Spleen (tissue), 13 donors: ENCODE measurements at regions of chr15 and their contacts with region 1.

Region 1: GRCh38 chr15:64651573-64652260 is 123.7 kb downstream of the RBPMS2 start:
- DNase-seq: no peak
- H3K4me3 ChIP-seq: no peak overlapping the region
- H3K27ac ChIP-seq: peak overlapping the region in 7 of 8 donors; percentile 10 to 75 (median 54)
- H3K4me1 ChIP-seq: peaks cover 10 to 47% (median 21%) of the 10 kb centered on the region in 6 donors
- H3K27me3 ChIP-seq: no peaks in the 10 kb centered on the region
- CTCF ChIP-seq: no peak
- POLR2A ChIP-seq: no peak

Region 2: DNA sequence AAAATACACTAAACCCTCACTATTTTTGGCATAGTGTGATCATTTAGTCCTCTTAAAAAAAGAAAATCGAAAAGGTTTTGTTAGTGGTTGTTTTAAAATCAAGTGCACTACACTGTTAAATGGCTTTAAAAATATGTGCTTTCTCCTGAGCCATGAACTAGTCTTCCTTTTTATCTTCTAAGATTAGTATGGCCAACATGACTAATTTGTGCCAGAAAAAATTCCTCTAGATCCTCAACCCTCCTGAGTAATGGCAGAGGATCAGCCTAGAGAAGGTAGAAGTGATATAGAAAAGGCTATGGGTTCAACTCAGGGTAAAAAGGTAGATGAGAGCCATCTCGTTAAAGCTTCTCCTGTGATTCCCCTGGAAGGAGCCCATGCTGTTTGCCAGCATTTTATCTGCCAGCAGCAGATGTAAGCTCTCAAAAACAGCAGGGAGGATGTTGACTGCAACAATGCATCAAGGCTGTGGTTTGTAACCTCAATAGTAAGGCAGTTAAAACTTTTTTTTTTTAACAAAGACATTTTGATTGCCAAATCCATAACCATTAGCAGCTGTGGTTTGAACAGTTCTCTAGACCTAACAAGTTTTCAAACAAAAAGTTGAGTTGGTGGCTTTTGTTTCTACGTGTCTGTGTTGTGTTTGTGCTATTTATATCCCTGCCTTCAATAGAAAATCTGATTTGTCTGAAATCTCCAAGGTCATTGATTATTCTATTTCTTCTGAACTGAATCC is 221.5 kb before region 1 on chr15:
- intact Hi-C with region 1: loop called (anchors 10 kb)
- DNase-seq: no peak
- H3K4me3 ChIP-seq: no peak overlapping the region
- H3K27ac ChIP-seq: peak overlapping the region; percentile 43 to 81 (median 70)
- H3K4me1 ChIP-seq: peaks cover 9 to 51% (median 31%) of the 10 kb centered on the region in 6 donors
- H3K27me3 ChIP-seq: no peaks in the 10 kb centered on the region
- CTCF ChIP-seq: no peak
- POLR2A ChIP-seq: no peak